H1 (cell line): ENCODE measurements at regions of chr2 and their contacts with region 1.

Region 1: DNA sequence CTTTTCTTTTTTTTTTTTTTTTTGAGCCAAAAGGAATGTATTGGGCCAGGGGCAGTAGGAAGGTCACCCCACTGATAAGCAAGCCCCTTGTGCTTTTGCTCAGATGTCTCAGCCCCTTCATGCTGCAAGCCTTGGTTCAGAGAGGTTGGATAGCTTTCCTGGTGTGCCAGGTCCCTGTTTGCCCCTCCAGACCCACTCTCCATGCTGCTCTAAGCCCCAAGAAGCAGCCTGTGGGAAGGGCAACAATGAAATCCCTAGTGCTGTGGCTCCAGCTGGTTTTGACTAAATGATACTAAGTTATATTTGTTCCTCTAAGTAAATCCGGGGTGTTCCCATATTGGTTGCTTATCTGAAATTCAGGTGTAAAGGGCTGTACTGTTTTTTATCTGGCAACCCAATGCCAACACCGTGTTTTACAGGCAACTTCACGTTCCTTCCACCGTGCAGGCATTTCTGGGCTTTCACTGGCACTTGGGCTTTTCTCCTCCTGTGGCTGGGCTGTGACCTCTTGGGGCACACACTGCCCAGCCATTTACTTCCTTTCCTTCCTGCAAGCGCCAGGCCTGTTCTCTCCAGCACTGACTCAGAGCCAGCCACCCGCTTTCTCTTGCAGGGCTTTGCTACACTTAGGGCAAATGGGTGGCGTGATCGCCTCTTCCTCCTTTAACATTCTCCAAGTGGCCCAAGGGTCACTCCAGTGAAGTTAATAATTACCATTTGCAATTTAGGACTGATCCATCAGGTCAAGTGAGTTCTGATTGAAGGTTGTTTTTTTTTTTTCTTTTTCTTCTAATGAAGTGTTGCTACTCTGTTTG is 21.6 kb downstream of the MERTK start:
- DNase-seq: no peak
- H3K4me3 ChIP-seq: no peak overlapping the region
- H3K27ac ChIP-seq: no peak overlapping the region
- H3K4me1 ChIP-seq: no peaks in the 10 kb centered on the region
- H3K27me3 ChIP-seq: no peaks in the 10 kb centered on the region
- CTCF ChIP-seq: no peak
- EP300 ChIP-seq: no peak
- POLR2A ChIP-seq: no peak
- RAD21 ChIP-seq: no peak

Region 2: GRCh38 chr2:111930409-111930808 is 10.4 kb after region 1 on chr2:
- CTCF ChIA-PET with region 1: interaction called, 16 read pairs
- POLR2A ChIA-PET with region 1: no interaction called
- DNase-seq: no peak
- H3K4me3 ChIP-seq: no peak overlapping the region
- H3K27ac ChIP-seq: no peak overlapping the region
- H3K4me1 ChIP-seq: peaks cover 0 to 3% (median 1%) of the 10 kb centered on the region in 4 experiments; a peak in 1 of 7 replicates
- H3K27me3 ChIP-seq: no peaks in the 10 kb centered on the region
- CTCF ChIP-seq: no peak
- EP300 ChIP-seq: no peak
- POLR2A ChIP-seq: no peak
- RAD21 ChIP-seq: no peak

Region 3: GRCh38 chr2:112189001-112189556 is 269.1 kb after region 1 on chr2:
- CTCF ChIA-PET with region 1: no interaction called
- POLR2A ChIA-PET with region 1: no interaction called
- DNase-seq: no peak
- H3K4me3 ChIP-seq: no peak overlapping the region
- H3K27ac ChIP-seq: no peak overlapping the region
- H3K4me1 ChIP-seq: no peaks in the 10 kb centered on the region
- H3K27me3 ChIP-seq: no peaks in the 10 kb centered on the region
- CTCF ChIP-seq: no peak
- EP300 ChIP-seq: no peak
- POLR2A ChIP-seq: no peak
- RAD21 ChIP-seq: no peak